BJ (cell line): ENCODE measurements at regions of chr3 and their contacts with region 1.

Region 1: DNA sequence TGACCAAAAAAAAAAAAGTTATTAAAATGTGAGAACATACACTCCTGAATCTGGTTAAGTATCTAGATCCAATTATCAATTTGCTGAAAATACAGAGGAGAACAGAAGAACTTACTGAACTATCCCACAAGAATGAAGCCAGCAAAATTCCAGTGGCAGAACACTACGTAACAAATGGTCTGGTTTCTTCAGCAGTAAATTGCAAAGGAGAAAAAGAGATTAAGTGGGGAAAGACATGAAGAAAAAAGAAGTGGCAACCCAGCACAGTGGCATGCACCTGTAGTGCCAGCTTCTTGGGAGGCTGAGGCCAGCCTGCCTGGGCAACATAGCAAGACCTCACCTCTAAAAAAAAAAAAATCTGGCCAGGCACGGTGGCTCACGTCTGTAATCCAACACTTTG is 62.1 kb downstream of the LHFPL4 start:
- DNase-seq: no peak
- H3K4me3 ChIP-seq: no peak overlapping the region
- H3K27me3 ChIP-seq: no peaks in the 10 kb centered on the region
- CTCF ChIP-seq: no peak

Region 2: DNA sequence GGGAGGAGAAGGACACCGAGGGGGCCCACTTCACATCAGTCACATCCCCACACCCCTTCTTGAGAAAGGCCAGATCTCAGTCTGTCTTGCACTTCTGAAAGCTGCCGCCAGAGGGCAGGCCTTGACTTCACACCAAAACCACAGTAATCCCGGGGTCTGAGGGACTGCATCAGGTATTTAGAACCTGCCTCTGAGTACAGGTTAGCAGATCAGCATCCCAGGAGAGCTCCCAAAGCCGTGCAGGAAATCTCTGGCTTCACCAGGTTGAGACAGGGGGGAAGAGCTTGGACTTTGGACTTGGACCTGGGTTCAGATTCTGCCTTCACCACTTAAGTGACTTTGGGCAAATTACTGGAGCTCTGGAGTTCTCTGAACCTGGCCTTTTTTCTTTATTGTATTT is 11.8 kb after region 1 on chr3:
- CTCF ChIA-PET with region 1: interaction called, 35 read pairs
- POLR2A ChIA-PET with region 1: no interaction called
- DNase-seq: no peak
- H3K4me3 ChIP-seq: no peak overlapping the region
- H3K27me3 ChIP-seq: peaks cover 5% of the 10 kb centered on the region
- CTCF ChIP-seq: peak; percentile 95

Region 3: DNA sequence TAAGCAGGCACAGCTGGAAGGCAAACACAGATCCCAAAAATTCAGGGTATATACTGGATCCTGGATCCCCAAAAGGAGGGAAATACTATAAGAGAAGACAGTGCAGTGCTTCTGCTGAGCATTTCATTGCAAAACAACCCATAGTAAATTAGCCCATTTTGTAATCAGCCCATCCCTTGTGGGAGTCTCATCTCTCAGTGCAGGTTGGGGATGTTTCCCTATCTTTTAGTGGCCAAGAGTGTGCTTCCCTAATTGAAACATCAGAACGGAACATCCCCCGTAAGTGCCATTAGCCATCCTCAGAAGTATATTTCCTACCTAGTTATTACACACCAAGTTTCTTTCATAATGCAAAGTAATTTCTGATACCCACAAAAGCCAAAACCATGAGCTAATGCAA is 146.6 kb after region 1 on chr3:
- CTCF ChIA-PET with region 1: no interaction called
- POLR2A ChIA-PET with region 1: no interaction called
- DNase-seq: no peak
- H3K4me3 ChIP-seq: no peak overlapping the region
- H3K27me3 ChIP-seq: no peaks in the 10 kb centered on the region
- CTCF ChIP-seq: no peak